Activated B cell treated with CpG ODN at 0.5 μM for 24 hours (primary cell): ENCODE measurements at regions of chrX and their contacts with region 1.

Region 1: GRCh38 chrX:70433848-70434351 is 10.7 kb upstream of the DLG3 start:
- DNase-seq: peak; percentile 60
- ATAC-seq: peak; percentile 76
- H3K4me3 Mint-ChIP-seq: peak overlapping the region; percentile 89
- H3K27ac Mint-ChIP-seq: peak overlapping the region; percentile 87
- H3K4me1 Mint-ChIP-seq: peaks cover 14% of the 10 kb centered on the region
- H3K27me3 Mint-ChIP-seq: no peaks in the 10 kb centered on the region
- CTCF ChIP-seq: no peak

Region 2: GRCh38 chrX:70133303-70134115 is 300.4 kb before region 1 on chrX and contains the start of gene IGBP1:
- CTCF ChIA-PET with region 1: interaction called, 7 read pairs
- POLR2A ChIA-PET with region 1: interaction called, 14 read pairs
- intact Hi-C with region 1: loop called (anchors 1 kb)
- DNase-seq: peak; percentile 57
- ATAC-seq: peak; percentile 82
- H3K4me3 Mint-ChIP-seq: peak within 1 kb of the TSS; percentile 99
- H3K27ac Mint-ChIP-seq: peak within 1 kb of the TSS; percentile 96
- H3K4me1 Mint-ChIP-seq: peaks cover 29% of the 10 kb centered on the region
- H3K27me3 Mint-ChIP-seq: no peaks in the 10 kb centered on the region
- CTCF ChIP-seq: no peak
- total RNA-seq, gene IGBP1: 51.6 and 52.7 TPM in 2 replicates

Region 3: DNA sequence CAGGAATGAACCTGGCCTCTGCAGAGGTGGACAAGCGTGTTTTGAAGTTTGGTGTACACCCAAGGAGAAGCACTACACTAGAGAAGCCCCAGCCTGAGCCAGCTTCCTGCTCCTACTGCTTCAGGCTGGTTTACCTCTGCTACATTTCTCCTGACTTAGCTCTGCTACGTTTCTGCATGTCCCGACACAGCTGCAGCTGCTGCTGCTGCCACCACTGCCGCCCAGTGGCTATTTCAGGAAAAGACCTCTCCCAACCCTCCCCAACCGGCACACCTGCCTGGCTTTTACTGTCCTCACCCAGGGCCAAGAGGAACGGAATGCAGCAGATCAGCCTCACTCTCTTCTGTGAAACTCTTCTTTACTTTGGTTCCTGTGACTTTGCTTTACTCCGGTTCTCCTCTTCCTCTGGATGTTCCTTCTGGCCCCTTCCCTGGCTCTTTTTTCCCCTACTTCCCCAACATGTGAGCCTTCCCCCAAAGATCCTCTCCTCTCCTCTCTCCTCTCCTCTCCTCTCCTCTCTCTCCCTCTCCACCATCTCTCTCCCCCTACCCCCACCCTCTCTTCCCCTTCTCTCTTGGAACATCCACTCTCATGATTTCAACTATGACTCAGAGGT is 170.8 kb before region 1 on chrX:
- CTCF ChIA-PET with region 1: interaction called, 4 read pairs
- POLR2A ChIA-PET with region 1: no interaction called
- intact Hi-C with region 1: loop called (anchors 1 kb)
- DNase-seq: no peak
- ATAC-seq: no peak
- H3K4me3 Mint-ChIP-seq: no peak overlapping the region
- H3K27ac Mint-ChIP-seq: no peak overlapping the region
- H3K4me1 Mint-ChIP-seq: no peaks in the 10 kb centered on the region
- H3K27me3 Mint-ChIP-seq: no peaks in the 10 kb centered on the region
- CTCF ChIP-seq: no peak

Region 4: GRCh38 chrX:70336767-70337166 is 97.1 kb before region 1 on chrX:
- CTCF ChIA-PET with region 1: no interaction called
- POLR2A ChIA-PET with region 1: no interaction called
- intact Hi-C with region 1: loop called (anchors 10 kb)
- DNase-seq: no peak
- ATAC-seq: peak; percentile 81
- H3K4me3 Mint-ChIP-seq: no peak overlapping the region
- H3K27ac Mint-ChIP-seq: no peak overlapping the region
- H3K4me1 Mint-ChIP-seq: peaks cover 6% of the 10 kb centered on the region
- H3K27me3 Mint-ChIP-seq: no peaks in the 10 kb centered on the region
- CTCF ChIP-seq: no peak

Region 5: DNA sequence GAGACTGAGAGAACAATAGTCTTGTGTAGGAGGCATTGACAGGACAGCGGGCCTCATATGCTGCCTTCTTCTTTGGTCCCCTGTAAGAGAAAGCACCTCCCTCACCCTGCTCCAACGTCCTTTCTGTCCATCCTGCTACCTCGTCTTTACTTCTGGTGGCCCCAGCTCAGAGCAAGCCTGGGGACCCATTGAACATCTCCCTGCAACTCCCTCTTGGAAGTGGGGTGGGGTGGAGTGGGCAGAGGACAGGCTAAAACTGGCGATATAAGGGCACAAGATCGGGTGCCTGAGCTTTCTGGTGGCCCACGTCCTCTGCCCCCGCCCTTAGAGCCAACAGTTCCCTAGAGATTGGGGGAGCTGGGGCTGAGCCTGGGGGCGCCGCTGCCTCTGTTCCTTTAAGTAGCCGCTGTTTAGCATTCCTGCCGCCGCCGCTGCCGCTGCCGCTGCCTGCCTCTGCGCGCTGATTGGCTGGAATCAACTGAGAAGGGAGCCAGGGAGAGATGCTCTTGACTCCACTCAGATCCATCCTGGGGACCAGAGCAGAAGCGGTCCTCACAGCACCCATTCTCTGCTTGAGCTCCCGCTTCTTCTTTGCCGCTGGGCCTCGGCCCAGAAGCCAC is 10.5 kb after region 1 on chrX and contains the start of gene DLG3:
- CTCF ChIA-PET with region 1: no interaction called
- POLR2A ChIA-PET with region 1: no interaction called
- intact Hi-C with region 1: loop called (anchors 1 kb)
- DNase-seq: no peak
- ATAC-seq: peak; percentile 31
- H3K4me3 Mint-ChIP-seq: peak within 1 kb of the TSS; percentile 69
- H3K27ac Mint-ChIP-seq: no peak within 1 kb of the TSS
- H3K4me1 Mint-ChIP-seq: peaks cover 3% of the 10 kb centered on the region
- H3K27me3 Mint-ChIP-seq: peaks cover 14% of the 10 kb centered on the region
- CTCF ChIP-seq: no peak
- total RNA-seq, gene DLG3: 2.4 and 3.5 TPM in 2 replicates

Region 6: DNA sequence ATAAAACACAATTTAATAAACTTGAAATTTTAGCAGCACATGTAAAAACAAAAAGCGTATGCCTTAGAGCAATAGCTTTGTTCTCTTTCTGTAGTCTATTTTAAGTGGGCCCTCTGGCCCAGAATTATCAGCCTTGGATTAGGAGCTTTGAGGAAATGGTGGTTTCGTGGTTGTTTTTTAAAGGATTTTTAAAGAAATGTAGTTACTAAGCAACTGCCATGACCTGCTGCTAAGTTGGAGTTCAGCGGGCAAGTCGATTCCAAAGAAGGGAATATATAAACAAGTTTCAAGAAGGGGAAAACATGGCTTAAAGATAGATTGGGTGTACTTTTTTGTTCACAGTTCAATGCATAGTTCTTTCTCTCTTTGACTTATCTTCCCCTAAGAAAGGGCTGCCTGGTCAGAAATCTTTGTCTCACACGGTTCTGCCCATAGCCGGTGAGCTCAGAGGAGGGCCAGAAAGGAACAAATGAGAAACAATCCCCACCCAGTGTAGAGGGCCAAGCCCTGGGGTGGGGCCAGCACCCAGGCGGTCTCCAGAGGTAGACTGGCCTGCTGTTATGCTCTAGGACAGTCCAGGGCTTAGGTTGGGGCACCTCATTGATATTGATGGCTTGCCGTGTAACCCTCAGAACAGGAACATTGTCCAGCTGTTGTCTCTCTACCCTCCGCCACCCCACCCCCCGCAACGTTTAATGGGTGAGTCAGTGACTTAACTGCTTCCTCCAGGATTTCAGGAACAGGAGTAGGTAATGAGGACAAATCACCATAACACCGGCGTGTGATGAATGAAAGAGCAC is 43.2 kb after region 1 on chrX:
- CTCF ChIA-PET with region 1: no interaction called
- POLR2A ChIA-PET with region 1: no interaction called
- intact Hi-C with region 1: no loop called
- DNase-seq: no peak
- ATAC-seq: no peak
- H3K4me3 Mint-ChIP-seq: no peak overlapping the region
- H3K27ac Mint-ChIP-seq: no peak overlapping the region
- H3K4me1 Mint-ChIP-seq: no peaks in the 10 kb centered on the region
- H3K27me3 Mint-ChIP-seq: no peaks in the 10 kb centered on the region
- CTCF ChIP-seq: no peak

Region 7: DNA sequence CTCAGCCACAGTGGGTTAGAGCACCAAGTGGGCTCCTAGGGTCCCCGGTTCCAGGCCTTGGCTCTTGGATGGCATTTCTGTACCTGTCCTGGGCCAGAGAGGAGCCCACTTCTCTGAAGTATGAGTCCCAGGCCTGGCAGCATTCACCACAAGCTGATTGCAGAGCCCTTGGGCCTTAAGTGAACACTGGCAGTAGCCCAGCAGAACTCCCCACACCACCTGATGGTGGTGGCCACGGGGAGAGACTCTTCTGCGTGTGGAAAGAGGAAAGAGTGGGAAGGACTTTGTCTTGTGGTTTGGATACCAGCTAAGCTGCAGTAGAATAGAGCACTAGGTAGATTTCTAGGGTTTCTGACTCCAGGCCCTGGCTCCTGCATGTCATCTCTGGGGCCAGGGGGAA is 115.5 kb after region 1 on chrX:
- CTCF ChIA-PET with region 1: no interaction called
- POLR2A ChIA-PET with region 1: no interaction called
- intact Hi-C with region 1: no loop called
- DNase-seq: no peak
- ATAC-seq: no peak
- H3K4me3 Mint-ChIP-seq: no peak overlapping the region
- H3K27ac Mint-ChIP-seq: no peak overlapping the region
- H3K4me1 Mint-ChIP-seq: no peaks in the 10 kb centered on the region
- H3K27me3 Mint-ChIP-seq: peaks cover 2% of the 10 kb centered on the region
- CTCF ChIP-seq: no peak

Region 8: DNA sequence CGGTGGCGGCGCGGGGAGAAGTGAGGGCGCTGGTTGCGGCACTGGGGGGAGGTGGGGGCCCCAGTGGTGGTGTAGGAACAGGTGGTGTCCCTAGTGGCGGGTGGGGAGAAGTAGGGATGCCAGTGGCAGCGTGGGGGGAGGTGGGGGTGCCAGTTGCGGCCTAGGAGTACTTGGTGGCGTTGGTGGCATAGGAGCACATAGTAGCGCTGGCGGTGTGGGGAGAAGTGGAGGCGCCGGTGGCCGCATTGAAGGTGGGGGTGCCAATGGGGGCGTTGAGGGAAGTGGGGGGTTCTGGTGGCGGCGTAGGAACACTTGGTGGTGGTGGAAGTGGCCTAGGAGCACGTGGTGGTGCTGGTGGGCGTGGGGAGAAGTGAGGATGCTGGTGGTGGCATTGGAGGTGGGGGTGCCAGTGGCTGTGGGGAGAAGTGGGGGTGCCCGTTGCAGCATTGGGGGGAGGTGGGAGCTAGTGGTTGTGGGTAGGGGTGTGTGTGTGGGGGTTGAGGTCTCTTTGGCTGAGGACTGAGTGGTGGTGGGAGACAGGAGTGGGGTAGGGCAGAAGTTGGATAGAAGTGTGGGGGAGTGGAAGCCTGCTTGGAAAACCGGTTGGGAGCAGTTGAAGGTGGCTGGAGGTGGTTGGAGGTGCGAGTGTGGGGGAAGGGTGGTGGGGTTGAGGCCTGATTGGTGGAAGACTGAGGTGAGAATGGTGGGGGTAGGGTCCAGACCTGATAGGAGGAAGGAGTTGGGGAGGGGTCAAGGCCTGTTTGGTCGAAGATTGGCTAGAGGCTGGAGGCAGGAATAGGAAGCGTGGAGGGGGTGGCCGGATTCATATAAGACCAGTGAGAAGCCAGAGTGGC is 1145.5 kb after region 1 on chrX:
- CTCF ChIA-PET with region 1: no interaction called
- POLR2A ChIA-PET with region 1: no interaction called
- intact Hi-C with region 1: no loop called
- DNase-seq: no peak
- ATAC-seq: no peak
- H3K4me3 Mint-ChIP-seq: no peak overlapping the region
- H3K27ac Mint-ChIP-seq: no peak overlapping the region
- H3K4me1 Mint-ChIP-seq: no peaks in the 10 kb centered on the region
- H3K27me3 Mint-ChIP-seq: no peaks in the 10 kb centered on the region
- CTCF ChIP-seq: no peak

Region 9: DNA sequence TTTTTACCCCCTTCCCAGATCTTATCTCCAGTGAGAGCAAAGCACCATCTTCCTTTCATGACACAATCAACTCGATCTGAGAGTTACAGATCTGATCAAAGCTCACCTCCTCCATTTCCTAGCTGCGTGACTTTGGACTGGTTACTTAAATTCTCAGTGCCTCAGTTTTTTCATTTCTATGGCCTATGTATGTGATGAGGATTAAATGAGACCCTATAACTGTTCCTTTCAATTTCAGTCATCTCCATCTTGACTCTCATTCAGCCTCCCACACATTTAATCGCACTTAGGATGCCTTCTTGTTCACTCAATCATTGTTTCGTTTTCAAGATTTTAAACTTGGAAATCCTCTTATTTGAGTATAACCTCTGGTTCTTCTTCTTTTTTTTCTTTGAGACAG is 1204.5 kb after region 1 on chrX:
- CTCF ChIA-PET with region 1: no interaction called
- POLR2A ChIA-PET with region 1: no interaction called
- intact Hi-C with region 1: no loop called
- DNase-seq: no peak
- ATAC-seq: no peak
- H3K4me3 Mint-ChIP-seq: no peak overlapping the region
- H3K27ac Mint-ChIP-seq: no peak overlapping the region
- H3K4me1 Mint-ChIP-seq: peaks cover 13% of the 10 kb centered on the region
- H3K27me3 Mint-ChIP-seq: no peaks in the 10 kb centered on the region
- CTCF ChIP-seq: no peak